Testis (tissue), 5 donors: ENCODE measurements at regions of chr5 and their contacts with region 1.

Region 1: DNA sequence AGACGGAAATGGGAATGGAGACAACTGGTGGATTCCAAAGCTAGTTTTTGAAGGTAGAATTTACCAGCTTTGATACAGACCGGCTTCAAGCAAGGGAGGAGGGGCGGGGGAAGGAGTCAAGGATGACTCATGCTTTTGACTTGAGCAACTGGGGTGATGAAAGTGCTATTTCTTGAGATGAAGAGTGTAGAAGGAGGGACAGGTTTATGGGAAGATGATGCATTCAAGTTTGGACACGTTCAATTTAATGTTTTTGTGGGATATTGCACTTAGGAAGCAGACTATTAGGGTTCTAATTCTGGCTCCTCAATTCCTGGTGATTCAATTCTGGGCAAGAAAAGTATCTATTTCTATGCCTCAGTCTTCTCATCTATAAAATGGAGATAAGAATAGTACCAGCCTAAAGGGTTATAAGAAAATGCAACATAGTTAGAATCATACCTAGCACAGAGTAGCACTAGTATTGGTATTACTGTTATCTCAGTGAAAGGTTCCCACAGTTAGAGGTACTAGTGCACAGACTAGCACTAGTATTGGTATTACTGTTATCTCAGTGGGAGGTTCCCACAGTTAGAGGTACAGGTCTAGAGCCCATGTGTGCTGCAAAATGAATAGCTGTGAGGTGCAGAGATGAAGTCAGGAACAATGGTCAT is 4.6 kb downstream of the NIPAL4 start:
- DNase-seq: no peak
- H3K4me3 ChIP-seq: no peak overlapping the region
- H3K27ac ChIP-seq: no peak overlapping the region
- H3K4me1 ChIP-seq: peaks cover 7% of the 10 kb centered on the region
- H3K27me3 ChIP-seq: no peaks in the 10 kb centered on the region
- CTCF ChIP-seq: no peak
- POLR2A ChIP-seq: no peak

Region 2: GRCh38 chr5:157603333-157604190 is 138.9 kb after region 1 on chr5:
- intact Hi-C with region 1: loop called (anchors 5 kb)
- DNase-seq: no peak
- H3K4me3 ChIP-seq: no peak overlapping the region
- H3K27ac ChIP-seq: no peak overlapping the region
- H3K4me1 ChIP-seq: no peaks in the 10 kb centered on the region
- H3K27me3 ChIP-seq: no peaks in the 10 kb centered on the region
- CTCF ChIP-seq: no peak
- POLR2A ChIP-seq: no peak

Region 3: DNA sequence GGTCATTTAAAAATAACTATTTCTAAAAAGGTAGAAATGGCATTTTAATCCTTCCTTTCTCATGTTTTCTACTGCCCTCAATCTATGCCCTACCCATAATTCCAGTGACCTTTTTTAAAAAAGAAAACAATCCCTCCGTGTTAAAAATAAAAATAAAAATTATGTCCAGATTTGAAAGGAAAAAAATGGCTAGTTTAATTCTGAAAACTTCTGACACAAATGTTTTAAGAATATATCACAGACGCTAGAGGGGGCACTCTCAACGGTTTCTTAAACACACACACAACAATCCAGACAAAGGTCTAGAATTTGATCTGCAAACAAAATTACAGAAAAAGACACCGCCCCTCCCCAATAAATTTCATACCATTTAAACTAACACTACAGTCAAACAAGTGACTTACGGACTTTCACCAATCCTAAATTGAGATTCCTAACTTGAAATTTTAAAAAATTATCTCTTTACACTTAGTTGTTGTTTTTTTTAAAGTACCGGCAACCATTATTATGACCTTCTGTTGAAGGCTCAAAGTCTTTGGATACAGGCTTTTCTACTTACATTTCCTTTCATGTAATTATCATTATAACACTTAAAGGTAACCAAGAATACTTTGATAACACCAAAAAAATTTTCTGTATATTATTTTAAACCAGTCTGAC is 356.1 kb after region 1 on chr5:
- intact Hi-C with region 1: no loop called
- DNase-seq: peak; percentile 43
- H3K4me3 ChIP-seq: no peak overlapping the region
- H3K27ac ChIP-seq: peak overlapping the region in 1 of 2 donors; percentile 20
- H3K4me1 ChIP-seq: peaks cover 9% of the 10 kb centered on the region
- H3K27me3 ChIP-seq: no peaks in the 10 kb centered on the region
- CTCF ChIP-seq: peak; percentile 48 to 50 (median 48)
- POLR2A ChIP-seq: no peak